Cardiac septum (tissue), 1 donor: ENCODE measurements at regions of chr7 and their contacts with region 1.

Region 1: GRCh38 chr7:70693686-70694360 is 438.1 kb upstream of the GALNT17 start:
- DNase-seq: peak; percentile 85

Region 2: DNA sequence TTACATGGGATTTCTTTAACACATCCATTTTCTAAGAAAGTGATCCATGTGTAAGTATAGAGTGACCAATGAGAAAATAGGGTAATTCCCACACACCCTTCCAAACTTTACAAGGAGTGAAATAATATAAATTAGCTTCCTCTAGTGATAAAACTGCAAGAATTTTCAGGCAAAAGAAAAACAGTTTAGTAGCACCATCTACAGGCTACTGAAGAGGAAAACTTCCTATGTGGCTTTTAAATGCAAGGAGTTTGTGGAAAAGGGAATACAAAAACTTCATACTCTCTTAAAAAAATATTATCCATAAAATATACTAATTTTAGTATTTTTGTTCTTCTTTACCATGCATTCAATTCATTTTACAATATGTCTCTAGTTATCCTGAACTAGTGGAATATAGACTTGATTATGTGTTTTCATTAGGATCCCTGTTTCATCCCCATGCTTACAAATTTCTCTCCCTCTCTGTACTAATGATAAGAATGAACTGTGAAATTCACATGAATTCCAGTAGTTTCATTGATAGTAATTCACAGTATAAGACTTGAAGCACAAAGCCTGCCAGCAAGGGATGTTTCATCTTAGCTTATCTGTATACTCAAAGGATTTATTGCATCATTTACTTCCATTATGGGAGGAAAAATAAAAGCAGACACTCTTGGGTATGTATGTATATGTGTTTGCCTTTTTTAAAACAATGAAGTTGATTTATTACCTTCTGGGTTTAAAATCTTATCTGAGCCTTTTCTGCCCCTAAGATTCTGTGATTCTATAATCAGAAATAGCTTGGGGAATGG is 652.7 kb before region 1 on chr7:
- intact Hi-C with region 1: loop called (anchors 5 kb)
- DNase-seq: no peak

Region 3: DNA sequence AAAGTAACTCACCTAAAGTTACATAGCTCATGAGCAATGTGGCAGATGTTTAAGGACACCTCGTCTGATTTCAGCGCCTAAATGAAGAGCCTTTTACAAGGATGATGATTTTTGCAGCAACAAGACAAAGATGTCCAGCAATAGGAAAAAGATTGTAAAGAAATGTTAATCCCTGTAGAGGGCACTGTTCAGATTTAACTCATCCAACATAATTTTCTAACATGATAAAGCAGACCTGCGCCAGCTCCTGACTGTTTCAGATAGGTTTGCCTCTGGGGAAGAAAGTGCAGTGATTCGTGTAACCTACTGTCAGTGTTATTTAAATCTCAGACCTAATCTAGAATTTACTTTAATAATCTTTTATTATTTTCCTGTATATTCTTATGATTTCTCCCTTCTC is 500.3 kb before region 1 on chr7:
- intact Hi-C with region 1: loop called (anchors 5 kb)
- DNase-seq: no peak

Region 4: DNA sequence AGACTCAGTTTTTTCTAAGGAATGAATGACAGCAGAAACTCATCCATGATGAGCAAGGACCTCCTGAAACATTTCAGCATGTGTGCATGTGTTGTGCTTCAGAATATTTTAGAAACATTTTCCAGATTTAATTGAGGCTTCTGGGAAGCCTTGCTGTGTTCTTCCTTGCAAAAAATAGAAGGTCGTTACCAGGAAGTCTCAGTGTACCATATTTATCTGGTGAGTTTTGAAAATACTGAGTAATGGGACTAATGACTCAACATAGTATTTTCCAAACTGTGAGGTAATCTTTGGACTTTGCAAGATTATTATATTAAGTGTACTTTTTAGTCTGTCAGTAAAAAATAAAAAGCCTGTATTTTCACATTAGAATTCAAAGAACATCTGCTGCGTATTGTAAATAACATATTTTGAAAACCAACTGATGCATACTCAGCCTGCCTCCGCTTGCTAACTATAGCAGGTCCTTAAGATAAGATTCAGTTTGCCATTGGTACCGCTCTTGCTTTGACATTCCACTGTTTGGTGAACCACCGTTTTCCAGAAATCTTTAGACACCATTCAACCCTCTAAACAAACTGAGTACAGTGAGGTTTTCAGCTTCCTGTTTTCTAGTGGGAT is 301.5 kb before region 1 on chr7:
- intact Hi-C with region 1: loop called (anchors 10 kb)
- DNase-seq: no peak